Heart right ventricle (tissue), 16 donors: ENCODE measurements at regions of chr9 and their contacts with region 1.

Region 1: GRCh38 chr9:1009101-1009707 is 32.7 kb downstream of the DMRT3 start:
- DNase-seq: peak; percentile 72 to 84
- ATAC-seq: peak; percentile 87 to 95 (median 92)
- H3K4me3 ChIP-seq: no peak overlapping the region
- H3K27ac ChIP-seq: no peak overlapping the region
- H3K4me1 ChIP-seq: peaks cover 0 to 22% (median 0%) of the 10 kb centered on the region in 9 donors
- H3K27me3 ChIP-seq: peaks cover 0 to 58% (median 26%) of the 10 kb centered on the region in 7 donors
- CTCF ChIP-seq: peak; percentile 89 to 98 (median 94)

Region 2: GRCh38 chr9:347667-348292 is 661.4 kb before region 1 on chr9:
- intact Hi-C with region 1: loop called in 6 of 10 experiments (anchors 5 to 10 kb)
- DNase-seq: no peak
- ATAC-seq: peak in 6 of 8 donors; percentile 40 to 74 (median 58)
- H3K4me3 ChIP-seq: no peak overlapping the region
- H3K27ac ChIP-seq: no peak overlapping the region
- H3K4me1 ChIP-seq: peaks cover 0 to under 1% (median 0%) of the 10 kb centered on the region in 9 donors
- H3K27me3 ChIP-seq: peaks cover 0 to 34% (median 4%) of the 10 kb centered on the region in 7 donors
- CTCF ChIP-seq: peak; percentile 32 to 82 (median 66)

Region 3: DNA sequence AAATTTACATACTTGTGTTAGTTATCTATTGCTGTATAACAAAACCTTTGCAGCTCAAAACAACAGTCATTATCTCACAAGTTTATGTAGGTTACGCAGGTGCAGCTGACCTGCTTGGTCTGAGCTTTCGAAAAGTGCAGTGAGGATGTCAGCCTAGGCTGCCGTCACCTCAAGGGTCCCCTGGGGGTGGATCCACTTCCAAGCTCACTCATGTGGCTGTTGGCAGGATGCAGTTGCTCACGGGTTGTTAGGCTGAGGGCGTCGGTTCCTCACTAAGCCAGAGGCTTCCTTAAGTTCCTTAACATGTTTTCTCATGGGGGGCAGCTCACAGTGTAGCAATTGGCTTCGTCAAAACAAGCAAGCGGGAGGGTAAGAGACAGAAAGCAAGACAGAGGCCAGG is 654.8 kb before region 1 on chr9:
- intact Hi-C with region 1: loop called in 6 of 10 experiments (anchors 5 to 10 kb)
- DNase-seq: no peak
- ATAC-seq: no peak
- H3K4me3 ChIP-seq: no peak overlapping the region
- H3K27ac ChIP-seq: no peak overlapping the region
- H3K4me1 ChIP-seq: peaks cover 0 to 10% (median 0%) of the 10 kb centered on the region in 9 donors
- H3K27me3 ChIP-seq: peaks cover 0 to 9% (median 3%) of the 10 kb centered on the region in 7 donors
- CTCF ChIP-seq: no peak

Region 4: GRCh38 chr9:385818-386398 is 623.3 kb before region 1 on chr9:
- intact Hi-C with region 1: loop called in 2 of 10 experiments (anchors 2 to 5 kb)
- DNase-seq: peak in 1 of 2 donors; percentile 45
- ATAC-seq: peak in 7 of 8 donors; percentile 69 to 89 (median 86)
- H3K4me3 ChIP-seq: no peak overlapping the region
- H3K27ac ChIP-seq: no peak overlapping the region
- H3K4me1 ChIP-seq: no peaks in the 10 kb centered on the region
- H3K27me3 ChIP-seq: peaks cover 0 to 3% (median 0%) of the 10 kb centered on the region in 7 donors
- CTCF ChIP-seq: peak; percentile 69 to 91 (median 87)

Region 5: DNA sequence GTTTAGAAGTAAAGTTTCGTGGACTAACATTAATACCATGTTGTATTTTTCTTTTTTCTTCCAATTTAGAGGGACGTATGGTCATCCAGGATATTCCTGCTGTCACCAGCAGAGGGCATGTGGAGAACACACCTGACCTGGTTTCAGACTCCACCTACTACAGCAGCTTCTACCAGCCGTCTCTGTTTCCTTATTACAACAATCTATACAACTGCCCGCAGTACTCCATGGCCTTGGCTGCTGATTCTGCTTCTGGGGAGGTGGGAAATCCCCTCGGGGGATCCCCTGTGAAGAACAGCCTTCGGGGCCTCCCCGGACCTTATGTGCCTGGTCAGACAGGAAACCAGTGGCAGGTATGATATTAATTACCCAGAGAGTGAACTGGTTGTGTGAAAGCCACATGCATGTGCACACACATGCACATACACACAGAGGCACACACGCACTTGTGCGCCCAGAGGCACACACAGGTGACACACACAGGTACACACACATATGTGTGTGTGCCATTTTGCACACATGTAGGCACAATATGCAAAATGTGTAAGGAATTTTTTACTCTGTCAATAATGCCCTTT is 115.3 kb before region 1 on chr9:
- intact Hi-C with region 1: loop called in 7 of 10 experiments (anchors 1 to 10 kb)
- DNase-seq: peak in 1 of 2 donors; percentile 13
- ATAC-seq: peak in 5 of 8 donors; percentile 44 to 79 (median 74)
- H3K4me3 ChIP-seq: no peak overlapping the region
- H3K27ac ChIP-seq: no peak overlapping the region
- H3K4me1 ChIP-seq: peaks cover 0 to 7% (median 0%) of the 10 kb centered on the region in 9 donors
- H3K27me3 ChIP-seq: peaks cover 0 to 27% (median 9%) of the 10 kb centered on the region in 7 donors
- CTCF ChIP-seq: peak; percentile 31 to 76 (median 69)

Region 6: DNA sequence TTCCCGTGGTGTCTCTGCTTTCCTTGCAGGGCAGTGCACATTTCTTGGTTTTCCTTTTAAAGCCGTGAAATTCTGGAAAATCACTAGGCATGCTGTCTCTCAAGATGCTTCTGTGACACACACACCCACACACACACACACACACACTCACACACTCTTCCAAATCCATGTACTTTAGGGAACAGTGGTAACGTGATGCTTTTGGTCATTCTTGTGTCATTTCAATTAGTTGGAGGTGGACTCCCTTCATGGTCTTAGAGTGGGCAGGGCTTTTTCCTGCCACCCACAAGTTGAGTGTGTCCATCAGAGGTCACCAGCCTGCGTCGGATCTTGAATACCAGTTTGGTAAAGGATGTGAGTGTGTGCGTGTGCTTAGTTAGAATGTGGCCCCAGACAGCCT is 103.3 kb before region 1 on chr9:
- intact Hi-C with region 1: no loop called
- DNase-seq: no peak
- ATAC-seq: no peak
- H3K4me3 ChIP-seq: no peak overlapping the region
- H3K27ac ChIP-seq: no peak overlapping the region
- H3K4me1 ChIP-seq: no peaks in the 10 kb centered on the region
- H3K27me3 ChIP-seq: peaks cover 0 to 89% (median 80%) of the 10 kb centered on the region in 7 donors
- CTCF ChIP-seq: no peak

Region 7: GRCh38 chr9:1429297-1429696 is 420.1 kb after region 1 on chr9:
- intact Hi-C with region 1: no loop called
- DNase-seq: peak in 1 of 2 donors; percentile 10
- ATAC-seq: peak in 3 of 8 donors; percentile 37 to 68 (median 61)
- H3K4me3 ChIP-seq: no peak overlapping the region
- H3K27ac ChIP-seq: no peak overlapping the region
- H3K4me1 ChIP-seq: no peaks in the 10 kb centered on the region
- H3K27me3 ChIP-seq: no peaks in the 10 kb centered on the region
- CTCF ChIP-seq: peak in 7 of 9 donors; percentile 39 to 53 (median 42)